Testis (tissue), 5 donors: ENCODE measurements at regions of chr10 and their contacts with region 1.

Region 1: DNA sequence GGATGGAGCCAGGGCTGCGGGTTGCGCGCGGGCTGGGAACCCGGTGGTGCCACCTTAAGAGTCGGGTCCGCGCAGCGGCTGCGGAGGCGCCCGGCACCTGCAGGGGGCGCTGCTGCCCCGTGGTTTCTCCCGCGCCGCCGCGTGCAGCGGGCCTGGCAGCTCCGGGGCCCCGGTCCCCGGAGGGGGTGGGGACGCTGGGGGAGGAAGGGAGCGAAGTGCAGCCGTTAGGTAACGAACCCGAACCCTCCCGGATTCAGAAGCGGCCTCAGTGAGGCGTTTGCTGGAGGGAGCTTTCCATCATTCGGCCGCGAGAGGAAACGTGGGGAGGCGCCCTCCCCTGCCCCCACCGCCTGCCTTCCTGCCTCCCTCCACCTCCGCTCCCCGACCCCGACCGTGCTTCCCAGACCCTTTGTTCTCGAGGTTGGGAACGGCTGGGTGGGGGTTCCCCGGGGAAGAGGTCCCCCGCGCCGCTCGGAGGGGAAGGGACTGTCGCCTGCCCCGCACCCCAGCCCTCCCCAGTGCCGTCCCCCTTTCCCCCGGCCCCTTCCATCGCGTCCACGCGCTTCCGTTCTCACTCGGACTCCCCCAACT is 29.6 kb downstream of the SKIDA1 start:
- DNase-seq: peak; percentile 90
- H3K4me3 ChIP-seq: peak overlapping the region; percentile 71 to 88
- H3K27ac ChIP-seq: peak overlapping the region; percentile 57 to 77
- H3K4me1 ChIP-seq: no peaks in the 10 kb centered on the region
- H3K27me3 ChIP-seq: no peaks in the 10 kb centered on the region
- CTCF ChIP-seq: peak; percentile 98 to 99 (median 98)
- POLR2A ChIP-seq: no peak

Region 2: GRCh38 chr10:20550246-20550645 is 945.6 kb before region 1 on chr10:
- intact Hi-C with region 1: no loop called
- DNase-seq: no peak
- H3K4me3 ChIP-seq: no peak overlapping the region
- H3K27ac ChIP-seq: no peak overlapping the region
- H3K4me1 ChIP-seq: no peaks in the 10 kb centered on the region
- H3K27me3 ChIP-seq: no peaks in the 10 kb centered on the region
- CTCF ChIP-seq: no peak
- POLR2A ChIP-seq: no peak

Region 3: GRCh38 chr10:21285742-21286331 is 210.0 kb before region 1 on chr10:
- intact Hi-C with region 1: loop called (anchors 10 kb)
- DNase-seq: no peak
- H3K4me3 ChIP-seq: no peak overlapping the region
- H3K27ac ChIP-seq: no peak overlapping the region
- H3K4me1 ChIP-seq: no peaks in the 10 kb centered on the region
- H3K27me3 ChIP-seq: no peaks in the 10 kb centered on the region
- CTCF ChIP-seq: no peak
- POLR2A ChIP-seq: no peak

Region 4: GRCh38 chr10:21533467-21534279 is 37.8 kb after region 1 on chr10 and contains the start of gene MLLT10:
- intact Hi-C with region 1: loop called (anchors 2 kb)
- DNase-seq: peak; percentile 96
- H3K4me3 ChIP-seq: peak within 1 kb of the TSS; percentile 84 to 93
- H3K27ac ChIP-seq: peak within 1 kb of the TSS; percentile 97 to 100
- H3K4me1 ChIP-seq: peaks cover 15% of the 10 kb centered on the region
- H3K27me3 ChIP-seq: no peaks in the 10 kb centered on the region
- CTCF ChIP-seq: peak in 1 of 3 experiments; percentile 30
- POLR2A ChIP-seq: no peak
- total RNA-seq, gene MLLT10: 130 to 144 TPM

Region 5: DNA sequence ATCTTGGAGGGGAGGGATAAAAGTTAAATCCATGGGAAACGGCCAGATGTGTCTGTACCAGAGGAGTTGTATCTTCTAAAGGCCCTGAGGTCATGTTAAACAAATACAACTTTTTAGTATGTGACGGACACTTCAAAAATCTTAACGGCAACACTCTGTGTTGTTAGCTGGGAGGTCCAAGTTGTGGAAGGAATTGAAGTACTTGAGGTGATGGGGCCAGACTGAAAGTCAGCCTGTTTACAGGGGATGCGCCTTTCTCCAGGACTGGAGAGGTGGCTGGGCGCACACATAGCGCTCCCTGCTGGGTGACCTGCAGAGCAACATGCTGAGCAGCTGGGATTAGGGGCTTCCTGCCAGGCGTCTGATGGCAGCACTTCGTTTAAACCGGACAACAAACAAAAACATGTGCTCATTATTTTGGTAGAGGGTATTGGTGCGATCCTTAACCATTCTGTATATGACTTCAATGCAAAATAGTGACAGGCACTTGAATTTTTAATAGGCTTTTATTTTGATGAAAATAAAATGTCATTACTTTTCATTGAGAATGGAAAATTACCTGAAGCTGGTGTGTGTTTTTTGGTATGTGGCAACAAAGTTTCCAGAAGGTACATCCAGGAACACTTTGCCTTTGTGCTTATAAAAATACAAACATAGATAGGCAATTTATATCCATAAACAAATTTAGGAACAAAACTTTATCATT is 236.4 kb after region 1 on chr10:
- intact Hi-C with region 1: loop called (anchors 5 kb)
- DNase-seq: peak; percentile 82
- H3K4me3 ChIP-seq: no peak overlapping the region
- H3K27ac ChIP-seq: no peak overlapping the region
- H3K4me1 ChIP-seq: no peaks in the 10 kb centered on the region
- H3K27me3 ChIP-seq: no peaks in the 10 kb centered on the region
- CTCF ChIP-seq: peak; percentile 68 to 84 (median 83)
- POLR2A ChIP-seq: no peak